ENCODE measurements at regions of chr18 and their contacts with region 1.

Region 1: DNA sequence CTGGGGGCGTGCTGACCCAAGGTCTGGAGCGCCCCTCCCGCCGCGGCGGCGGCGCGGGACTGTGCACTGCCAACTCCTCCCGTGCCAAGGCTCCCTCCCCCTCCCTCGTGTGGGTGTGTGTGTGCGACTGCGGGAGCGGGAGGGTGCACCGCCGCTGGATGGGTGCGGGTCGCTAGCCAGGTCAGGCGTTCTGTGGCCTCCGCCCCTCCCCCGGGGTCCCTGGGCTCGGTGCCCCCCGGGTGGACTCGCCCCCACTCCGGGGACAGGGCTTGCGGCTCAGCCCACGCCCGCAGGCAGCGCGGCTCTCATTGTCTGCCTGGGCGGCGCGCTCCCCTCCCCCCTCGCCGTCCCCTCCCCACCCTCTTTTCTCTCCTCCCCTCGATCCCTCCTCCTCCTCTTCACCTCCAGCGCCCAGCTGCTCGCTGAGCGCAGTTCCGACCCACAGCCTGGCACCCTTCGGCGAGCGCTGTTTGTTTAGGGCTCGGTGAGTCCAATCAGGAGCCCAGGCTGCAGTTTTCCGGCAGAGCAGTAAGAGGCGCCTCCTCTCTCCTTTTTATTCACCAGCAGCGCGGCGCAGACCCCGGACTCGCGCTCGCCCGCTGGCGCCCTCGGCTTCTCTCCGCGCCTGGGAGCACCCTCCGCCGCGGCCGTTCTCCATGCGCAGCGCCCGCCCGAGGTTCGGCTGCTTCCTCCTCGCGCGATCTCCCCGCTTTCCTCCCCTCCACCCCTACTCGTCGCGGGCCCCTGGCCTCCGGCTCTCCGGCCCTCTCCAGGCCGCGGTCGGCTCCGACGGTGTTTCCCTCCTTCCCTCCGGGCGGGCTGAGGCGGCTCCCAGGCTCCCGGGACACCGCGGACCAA is at the start of gene GATA6:
- DNase-seq: peak; percentile 95 to 97
- H3K4me3 ChIP-seq: peak within 1 kb of the TSS; percentile 69
- H3K4me3 Mint-ChIP-seq: peak within 1 kb of the TSS; percentile 74
- H3K27ac Mint-ChIP-seq: peak within 1 kb of the TSS; percentile 91
- H3K4me1 ChIP-seq: no peaks in the 10 kb centered on the region; the same call in 1 of the 2 replicates
- H3K4me1 Mint-ChIP-seq: peaks cover 6% of the 10 kb centered on the region
- H3K27me3 ChIP-seq: no peaks in the 10 kb centered on the region
- H3K27me3 Mint-ChIP-seq: no peaks in the 10 kb centered on the region
- CTCF ChIP-seq: peak; percentile 8 to 38
- total RNA-seq, gene GATA6: 124 and 136 TPM in 2 replicates

Region 2: GRCh38 chr18:21914739-21915319 is 254.4 kb before region 1 on chr18:
- CTCF ChIA-PET with region 1: interaction called, 4 read pairs
- POLR2A ChIA-PET with region 1: no interaction called
- intact Hi-C with region 1: loop called (anchors 1 kb)
- DNase-seq: peak; percentile 69 to 73
- H3K4me3 ChIP-seq: no peak overlapping the region
- H3K4me3 Mint-ChIP-seq: no peak overlapping the region
- H3K27ac Mint-ChIP-seq: no peak overlapping the region
- H3K4me1 ChIP-seq: peaks cover 29% of the 10 kb centered on the region
- H3K4me1 Mint-ChIP-seq: peaks cover 24% of the 10 kb centered on the region
- H3K27me3 ChIP-seq: no peaks in the 10 kb centered on the region
- H3K27me3 Mint-ChIP-seq: no peaks in the 10 kb centered on the region
- CTCF ChIP-seq: peak; percentile 78 to 84

Region 3: DNA sequence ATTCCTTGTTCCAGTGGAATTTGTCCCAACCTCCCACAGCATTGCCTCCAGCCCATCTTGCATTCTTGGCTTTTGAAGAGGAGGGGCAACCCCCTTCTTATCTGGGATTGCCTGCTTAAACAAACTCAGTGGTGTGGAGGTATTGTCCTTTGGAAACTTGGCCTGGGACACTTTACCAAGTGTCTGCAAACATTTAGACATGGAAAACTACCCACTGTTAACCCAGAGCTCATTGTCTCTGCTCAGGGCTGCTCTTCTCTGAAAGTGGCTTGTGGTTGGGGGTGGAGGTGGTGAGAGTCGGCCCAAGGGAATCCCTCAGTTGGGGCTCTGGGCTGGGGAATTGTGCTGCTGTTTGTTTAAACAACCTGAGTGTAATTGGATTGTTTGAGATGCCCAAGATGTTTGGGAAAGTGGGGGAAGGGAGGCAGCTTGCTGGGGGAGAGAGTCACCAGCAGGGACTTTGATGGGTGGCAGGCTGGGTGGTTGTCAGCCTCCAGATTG is 178.1 kb before region 1 on chr18:
- CTCF ChIA-PET with region 1: no interaction called
- POLR2A ChIA-PET with region 1: interaction called, 3 read pairs
- intact Hi-C with region 1: loop called (anchors 1 kb)
- DNase-seq: peak; percentile 91 to 96
- H3K4me3 ChIP-seq: no peak overlapping the region
- H3K4me3 Mint-ChIP-seq: peak overlapping the region; percentile 59
- H3K27ac Mint-ChIP-seq: peak overlapping the region; percentile 96
- H3K4me1 ChIP-seq: peaks cover 76% of the 10 kb centered on the region
- H3K4me1 Mint-ChIP-seq: peaks cover 31% of the 10 kb centered on the region
- H3K27me3 ChIP-seq: no peaks in the 10 kb centered on the region
- H3K27me3 Mint-ChIP-seq: no peaks in the 10 kb centered on the region
- CTCF ChIP-seq: no peak

Region 4: GRCh38 chr18:22044474-22045220 is 124.6 kb before region 1 on chr18:
- CTCF ChIA-PET with region 1: interaction called, 3 read pairs
- POLR2A ChIA-PET with region 1: interaction called, 4 read pairs
- intact Hi-C with region 1: loop called (anchors 2 kb)
- DNase-seq: peak; percentile 88 to 94
- H3K4me3 ChIP-seq: peak overlapping the region; percentile 22
- H3K4me3 Mint-ChIP-seq: peak overlapping the region; percentile 71
- H3K27ac Mint-ChIP-seq: peak overlapping the region; percentile 89
- H3K4me1 ChIP-seq: peaks cover 88% of the 10 kb centered on the region
- H3K4me1 Mint-ChIP-seq: peaks cover 79% of the 10 kb centered on the region
- H3K27me3 ChIP-seq: no peaks in the 10 kb centered on the region
- H3K27me3 Mint-ChIP-seq: no peaks in the 10 kb centered on the region
- CTCF ChIP-seq: no peak

Region 5: GRCh38 chr18:22084547-22084946 is 84.7 kb before region 1 on chr18:
- CTCF ChIA-PET with region 1: interaction called, 3 read pairs
- POLR2A ChIA-PET with region 1: interaction called, 4 read pairs
- intact Hi-C with region 1: loop called (anchors 1 kb)
- DNase-seq: peak; percentile 78 to 91
- H3K4me3 ChIP-seq: peak overlapping the region; percentile 3; the same call in 1 of the 2 replicates
- H3K4me3 Mint-ChIP-seq: peak overlapping the region; percentile 69
- H3K27ac Mint-ChIP-seq: peak overlapping the region; percentile 87
- H3K4me1 ChIP-seq: peaks cover 75% of the 10 kb centered on the region
- H3K4me1 Mint-ChIP-seq: peaks cover 61% of the 10 kb centered on the region
- H3K27me3 ChIP-seq: no peaks in the 10 kb centered on the region
- H3K27me3 Mint-ChIP-seq: no peaks in the 10 kb centered on the region
- CTCF ChIP-seq: no peak

Region 6: GRCh38 chr18:22128954-22129353 is 40.3 kb before region 1 on chr18:
- CTCF ChIA-PET with region 1: no interaction called
- POLR2A ChIA-PET with region 1: no interaction called
- intact Hi-C with region 1: no loop called
- DNase-seq: no peak
- H3K4me3 ChIP-seq: no peak overlapping the region
- H3K4me3 Mint-ChIP-seq: no peak overlapping the region
- H3K27ac Mint-ChIP-seq: no peak overlapping the region
- H3K4me1 ChIP-seq: peaks cover 22% of the 10 kb centered on the region
- H3K4me1 Mint-ChIP-seq: peaks cover 34% of the 10 kb centered on the region
- H3K27me3 ChIP-seq: no peaks in the 10 kb centered on the region
- H3K27me3 Mint-ChIP-seq: no peaks in the 10 kb centered on the region
- CTCF ChIP-seq: no peak

Region 7: GRCh38 chr18:22342625-22343024 is 173.4 kb after region 1 on chr18:
- CTCF ChIA-PET with region 1: no interaction called
- POLR2A ChIA-PET with region 1: no interaction called
- intact Hi-C with region 1: no loop called
- DNase-seq: no peak
- H3K4me3 ChIP-seq: no peak overlapping the region
- H3K4me3 Mint-ChIP-seq: no peak overlapping the region
- H3K27ac Mint-ChIP-seq: no peak overlapping the region
- H3K4me1 ChIP-seq: peaks cover 8% of the 10 kb centered on the region
- H3K4me1 Mint-ChIP-seq: peaks cover 14% of the 10 kb centered on the region
- H3K27me3 ChIP-seq: no peaks in the 10 kb centered on the region
- H3K27me3 Mint-ChIP-seq: no peaks in the 10 kb centered on the region
- CTCF ChIP-seq: no peak

Region 8: GRCh38 chr18:22563098-22563707 is 394.0 kb after region 1 on chr18:
- CTCF ChIA-PET with region 1: no interaction called
- POLR2A ChIA-PET with region 1: no interaction called
- intact Hi-C with region 1: loop called (anchors 5 kb)
- DNase-seq: peak; percentile 68 to 75
- H3K4me3 ChIP-seq: no peak overlapping the region
- H3K4me3 Mint-ChIP-seq: no peak overlapping the region
- H3K27ac Mint-ChIP-seq: no peak overlapping the region
- H3K4me1 ChIP-seq: peaks cover 3% of the 10 kb centered on the region; the same call in 1 of the 2 replicates
- H3K4me1 Mint-ChIP-seq: peaks cover 9% of the 10 kb centered on the region
- H3K27me3 ChIP-seq: no peaks in the 10 kb centered on the region
- H3K27me3 Mint-ChIP-seq: no peaks in the 10 kb centered on the region
- CTCF ChIP-seq: peak; percentile 68 to 70

Measured in Caco-2 (cell line).